ENCODE measurements at regions of chr5 and their contacts with region 1.

Region 1: DNA sequence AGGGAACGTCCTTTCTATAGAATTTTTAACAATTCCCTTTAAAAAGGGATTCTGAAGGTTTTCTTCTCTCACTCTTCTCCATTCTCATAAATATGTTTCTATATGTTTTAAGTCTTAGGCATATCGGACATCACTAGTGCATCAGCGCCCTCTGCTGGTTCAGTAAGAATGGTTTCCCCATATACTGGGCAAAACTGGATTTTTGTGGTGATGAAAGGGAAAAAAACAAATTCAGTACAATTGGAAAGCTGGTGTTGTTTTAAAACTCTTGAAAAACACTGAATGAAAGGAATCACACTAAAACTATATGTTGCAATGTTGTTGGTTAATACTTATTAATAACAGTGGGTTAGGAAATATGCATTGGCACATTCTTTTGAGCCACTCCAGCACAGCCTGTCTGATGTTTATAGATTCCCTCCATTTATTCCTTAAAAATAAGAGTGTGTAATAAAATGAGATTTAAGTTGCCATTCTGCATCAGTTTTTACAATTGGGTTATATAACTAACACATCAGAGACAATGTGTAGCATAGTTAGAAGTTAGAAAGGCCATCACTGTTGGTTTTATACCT is 15.8 kb downstream of the CWC27 start:
- DNase-seq: peak; percentile 22
- H3K4me3 ChIP-seq: no peak overlapping the region
- H3K27ac ChIP-seq: no peak overlapping the region
- H3K4me1 ChIP-seq: no peaks in the 10 kb centered on the region
- H3K27me3 ChIP-seq: no peaks in the 10 kb centered on the region
- CTCF ChIP-seq: peak; percentile 97
- EP300 ChIP-seq: no peak
- RAD21 ChIP-seq: peak; percentile 86

Region 2: GRCh38 chr5:64628901-64629300 is 155.6 kb before region 1 on chr5:
- CTCF ChIA-PET with region 1: interaction called, 75 read pairs
- POLR2A ChIA-PET with region 1: no interaction called
- DNase-seq: no peak
- H3K4me3 ChIP-seq: no peak overlapping the region
- H3K27ac ChIP-seq: no peak overlapping the region
- H3K4me1 ChIP-seq: no peaks in the 10 kb centered on the region; a peak in 1 of 4 replicates
- H3K27me3 ChIP-seq: peaks cover 14% of the 10 kb centered on the region; the same call in 1 of the 2 replicates
- CTCF ChIP-seq: no peak
- EP300 ChIP-seq: no peak
- RAD21 ChIP-seq: no peak

Region 3: DNA sequence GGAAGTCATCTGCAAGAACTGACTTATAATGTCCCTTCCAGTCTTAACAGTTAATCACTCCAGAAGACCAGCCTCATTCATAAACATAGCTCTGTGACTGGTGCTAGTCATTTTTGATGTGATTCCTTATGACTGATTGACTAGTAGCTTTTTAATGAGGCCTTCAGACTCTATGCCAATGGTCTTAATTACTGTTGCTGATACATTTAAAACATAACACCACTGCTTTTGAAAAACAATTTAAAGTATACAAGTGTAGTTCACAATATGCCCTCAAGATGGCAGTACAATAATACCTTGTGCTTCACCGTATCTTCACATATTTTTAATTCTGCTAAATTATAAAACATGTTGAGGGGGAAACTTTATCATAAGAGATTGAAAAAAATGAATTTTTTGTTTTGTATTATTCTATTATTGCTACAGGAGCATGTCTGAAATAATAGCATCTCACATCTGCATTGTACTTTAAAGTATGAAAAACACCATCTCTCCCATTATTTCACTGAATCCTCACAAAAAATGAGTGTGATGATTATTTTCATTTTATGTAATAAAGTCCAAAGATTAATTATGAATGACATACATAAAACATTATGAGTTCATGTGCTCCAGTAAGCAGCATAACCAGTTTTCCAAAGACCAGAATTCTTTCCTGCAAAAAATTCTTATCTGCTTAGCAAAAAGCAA is 149.4 kb before region 1 on chr5:
- CTCF ChIA-PET with region 1: interaction called, 75 read pairs
- POLR2A ChIA-PET with region 1: no interaction called
- DNase-seq: peak; percentile 8
- H3K4me3 ChIP-seq: no peak overlapping the region; a peak in 1 of 4 replicates
- H3K27ac ChIP-seq: no peak overlapping the region
- H3K4me1 ChIP-seq: no peaks in the 10 kb centered on the region; a peak in 1 of 4 replicates
- H3K27me3 ChIP-seq: peaks cover 14% of the 10 kb centered on the region; the same call in 1 of the 2 replicates
- CTCF ChIP-seq: peak; percentile 88
- EP300 ChIP-seq: no peak
- RAD21 ChIP-seq: peak; percentile 80

Region 4: GRCh38 chr5:64768358-64769312 is 15.9 kb before region 1 on chr5 and contains the starts of genes CWC27 and SREK1IP1:
- CTCF ChIA-PET with region 1: interaction called, 16 read pairs
- POLR2A ChIA-PET with region 1: no interaction called
- DNase-seq: peak; percentile 75
- H3K4me3 ChIP-seq: peak within 1 kb of the TSS; percentile 97 to 98
- H3K27ac ChIP-seq: peak within 1 kb of the TSS; percentile 69 to 96
- H3K4me1 ChIP-seq: peaks cover 5 to 17% of the 10 kb centered on the region in 2 experiments; a peak in 3 of 4 replicates
- H3K27me3 ChIP-seq: no peaks in the 10 kb centered on the region
- CTCF ChIP-seq: no peak
- EP300 ChIP-seq: 0 out of 4 replicates have a peak, but pooled peaks of 1 of the 2 experiments have one; percentile 63
- RAD21 ChIP-seq: no peak
- polyA plus RNA-seq, gene CWC27: 6.6 and 10.2 TPM in 2 replicates
- polyA plus RNA-seq, gene SREK1IP1: 1.2 TPM in 2 replicates

Region 5: GRCh38 chr5:64822320-64822719 is 37.8 kb after region 1 on chr5:
- CTCF ChIA-PET with region 1: no interaction called
- POLR2A ChIA-PET with region 1: no interaction called
- DNase-seq: no peak
- H3K4me3 ChIP-seq: no peak overlapping the region
- H3K27ac ChIP-seq: no peak overlapping the region
- H3K4me1 ChIP-seq: peaks cover 0 to 12% of the 10 kb centered on the region in 2 experiments; a peak in 1 of 4 replicates
- H3K27me3 ChIP-seq: no peaks in the 10 kb centered on the region
- CTCF ChIP-seq: no peak
- EP300 ChIP-seq: no peak
- RAD21 ChIP-seq: no peak

Measured in SK-N-SH (cell line).